Mammary epithelial cell (primary cell): ENCODE measurements at regions of chr1 and their contacts with region 1.

Region 1: GRCh38 chr1:19179597-19180264 is 30.3 kb downstream of the UBR4 start:
- DNase-seq: no peak
- H3K4me3 ChIP-seq: no peak overlapping the region
- H3K27ac ChIP-seq: no peak overlapping the region
- H3K4me1 ChIP-seq: no peaks in the 10 kb centered on the region
- H3K27me3 ChIP-seq: no peaks in the 10 kb centered on the region
- CTCF ChIP-seq: peak; percentile 16 to 32

Region 2: DNA sequence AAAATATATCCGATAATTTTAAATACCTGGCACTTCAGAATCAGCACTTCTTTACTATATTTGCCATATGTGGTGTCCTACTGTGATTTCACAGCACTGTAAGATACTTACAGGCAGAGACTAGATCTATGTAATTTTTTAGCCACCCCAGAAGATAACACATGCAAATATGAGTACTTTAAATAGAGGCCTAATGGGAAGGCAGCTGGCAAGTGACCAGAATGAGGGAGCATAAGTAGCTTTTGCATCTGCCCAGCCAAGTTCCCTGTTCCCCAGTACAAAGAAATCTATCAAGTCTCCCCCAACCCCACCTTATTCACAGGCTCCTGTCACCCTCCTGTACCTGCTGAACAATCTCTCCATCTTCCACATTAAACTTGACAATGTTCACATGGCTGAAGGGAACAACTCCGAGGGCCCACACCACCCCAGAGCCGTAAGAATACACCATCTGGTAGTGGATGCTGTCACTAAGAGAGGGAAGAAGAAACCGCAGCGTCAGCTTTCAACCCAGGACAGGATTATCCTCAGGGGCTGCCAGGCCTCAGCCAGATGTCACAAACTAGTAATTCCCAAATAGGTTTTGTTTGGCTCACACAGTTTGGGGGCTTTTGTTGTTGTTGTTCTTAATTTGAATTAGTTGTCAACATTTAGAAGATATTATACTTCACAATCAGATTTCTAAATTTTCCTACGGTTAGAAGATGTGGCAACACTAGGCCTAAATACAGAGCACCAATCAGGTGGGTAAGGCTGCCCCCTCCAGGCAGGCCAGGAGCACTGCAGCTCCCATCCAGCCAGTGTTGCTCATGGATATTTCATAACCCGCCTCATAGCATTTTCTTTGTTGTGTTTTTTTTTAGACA is 61.2 kb after region 1 on chr1:
- CTCF ChIA-PET with region 1: no interaction called
- dilution Hi-C with region 1: no loop called
- in situ Hi-C with region 1: no loop called
- intact Hi-C with region 1: loop called (anchors 5 kb)
- DNase-seq: peak; percentile 58
- H3K4me3 ChIP-seq: no peak overlapping the region
- H3K27ac ChIP-seq: no peak overlapping the region
- H3K4me1 ChIP-seq: no peaks in the 10 kb centered on the region
- H3K27me3 ChIP-seq: no peaks in the 10 kb centered on the region
- CTCF ChIP-seq: peak; percentile 91 to 99